Adrenal gland (tissue), 19 donors: ENCODE measurements at regions of chr4 and their contacts with region 1.

Region 1: GRCh38 chr4:85147439-85148076 is 181.1 kb upstream of the WDFY3 start:
- DNase-seq: peak; percentile 25 to 76 (median 50)
- H3K4me3 ChIP-seq: no peak overlapping the region
- H3K27ac ChIP-seq: no peak overlapping the region
- H3K4me1 ChIP-seq: no peaks in the 10 kb centered on the region
- H3K27me3 ChIP-seq: no peaks in the 10 kb centered on the region
- CTCF ChIP-seq: peak; percentile 52 to 75 (median 67)
- POLR2A ChIP-seq: no peak

Region 2: GRCh38 chr4:85005865-85006377 is 141.6 kb before region 1 on chr4:
- intact Hi-C with region 1: no loop called
- DNase-seq: peak; percentile 41 to 76 (median 60)
- H3K4me3 ChIP-seq: no peak overlapping the region
- H3K27ac ChIP-seq: no peak overlapping the region
- H3K4me1 ChIP-seq: peaks cover 0 to 4% of the 10 kb centered on the region in 2 donors
- H3K27me3 ChIP-seq: no peaks in the 10 kb centered on the region
- CTCF ChIP-seq: no peak
- POLR2A ChIP-seq: no peak

Region 3: GRCh38 chr4:85747882-85748491 is 600.4 kb after region 1 on chr4:
- intact Hi-C with region 1: loop called (anchors 5 to 10 kb)
- DNase-seq: peak; percentile 28 to 73 (median 49)
- H3K4me3 ChIP-seq: no peak overlapping the region
- H3K27ac ChIP-seq: no peak overlapping the region
- H3K4me1 ChIP-seq: no peaks in the 10 kb centered on the region
- H3K27me3 ChIP-seq: no peaks in the 10 kb centered on the region
- CTCF ChIP-seq: peak; percentile 64 to 89 (median 84)
- POLR2A ChIP-seq: no peak

Region 4: GRCh38 chr4:85756938-85757337 is 609.4 kb after region 1 on chr4:
- intact Hi-C with region 1: loop called in 1 of 2 experiments (anchors 10 kb)
- DNase-seq: peak in 2 of 7 donors; percentile 19 to 30
- H3K4me3 ChIP-seq: no peak overlapping the region
- H3K27ac ChIP-seq: no peak overlapping the region
- H3K4me1 ChIP-seq: no peaks in the 10 kb centered on the region
- H3K27me3 ChIP-seq: no peaks in the 10 kb centered on the region
- CTCF ChIP-seq: peak in 4 of 6 experiments; percentile 20 to 36 (median 32)
- POLR2A ChIP-seq: no peak